Activated CD4-positive, alpha-beta memory T cell treated with anti-CD3 and anti-CD28 coated beads for 36 hours (primary cell): ENCODE measurements at regions of chr9 and their contacts with region 1.

Region 1: GRCh38 chr9:20552874-20553575 is 69.3 kb downstream of the MLLT3 start:
- DNase-seq: no peak
- H3K4me3 Mint-ChIP-seq: peak overlapping the region; percentile 5
- H3K27ac Mint-ChIP-seq: peak overlapping the region; percentile 15
- H3K4me1 Mint-ChIP-seq: peaks cover 66% of the 10 kb centered on the region
- H3K27me3 Mint-ChIP-seq: no peaks in the 10 kb centered on the region

Region 2: GRCh38 chr9:20508242-20508641 is 44.8 kb before region 1 on chr9:
- CTCF ChIA-PET with region 1: no interaction called
- POLR2A ChIA-PET with region 1: no interaction called
- intact Hi-C with region 1: loop called (anchors 1 kb)
- DNase-seq: peak; percentile 18
- H3K4me3 Mint-ChIP-seq: no peak overlapping the region
- H3K27ac Mint-ChIP-seq: no peak overlapping the region
- H3K4me1 Mint-ChIP-seq: peaks cover 76% of the 10 kb centered on the region
- H3K27me3 Mint-ChIP-seq: no peaks in the 10 kb centered on the region